BJ (cell line): ENCODE measurements at regions of chr3 and their contacts with region 1.

Region 1: GRCh38 chr3:119681279-119681678 is 4.1 kb upstream of the COX17 start:
- DNase-seq: no peak
- H3K4me3 ChIP-seq: no peak overlapping the region
- H3K27me3 ChIP-seq: peaks cover 2% of the 10 kb centered on the region; the same call in 1 of the 2 replicates
- CTCF ChIP-seq: peak; percentile 55

Region 2: DNA sequence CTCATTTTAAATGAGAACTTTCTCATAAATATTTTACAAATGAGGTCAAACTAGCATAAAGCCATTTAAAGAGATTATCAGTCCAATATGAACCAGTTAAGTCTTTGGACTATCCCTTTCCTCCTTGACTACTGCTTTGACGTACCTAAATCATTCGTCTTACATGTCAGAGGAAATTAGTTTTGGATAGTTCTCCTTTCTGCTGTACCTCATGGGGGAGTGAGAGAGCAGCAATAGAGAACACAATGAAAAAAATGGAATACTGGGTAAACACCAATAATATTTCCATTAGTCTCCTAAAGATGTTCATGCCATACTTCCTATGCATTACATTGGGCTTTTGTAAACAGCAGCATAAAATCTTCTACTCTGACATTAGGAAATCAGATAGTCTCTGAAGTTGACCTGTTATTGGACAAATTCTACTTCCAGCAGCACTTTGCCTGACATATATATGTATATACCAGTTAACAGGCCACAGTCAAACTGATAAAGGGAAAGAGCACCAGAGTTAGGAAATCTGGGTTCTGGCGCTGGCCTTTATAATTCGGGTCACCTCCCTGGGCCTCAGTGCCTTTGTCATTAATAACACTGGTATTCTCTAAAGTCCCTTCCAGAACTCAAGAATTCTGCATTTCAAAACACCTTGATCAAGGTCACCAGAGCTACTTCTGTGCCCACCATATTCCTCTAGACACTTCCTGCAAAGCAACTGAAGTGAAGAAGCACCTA is 156.2 kb before region 1 on chr3:
- CTCF ChIA-PET with region 1: interaction called, 18 read pairs
- POLR2A ChIA-PET with region 1: no interaction called
- DNase-seq: no peak
- H3K4me3 ChIP-seq: no peak overlapping the region
- H3K27me3 ChIP-seq: no peaks in the 10 kb centered on the region
- CTCF ChIP-seq: peak; percentile 44

Region 3: GRCh38 chr3:119600732-119601131 is 80.5 kb before region 1 on chr3:
- CTCF ChIA-PET with region 1: interaction called, 19 read pairs
- POLR2A ChIA-PET with region 1: no interaction called
- DNase-seq: no peak
- H3K4me3 ChIP-seq: no peak overlapping the region
- H3K27me3 ChIP-seq: no peaks in the 10 kb centered on the region
- CTCF ChIP-seq: peak; percentile 47

Region 4: GRCh38 chr3:119695480-119695879 is 14.2 kb after region 1 on chr3:
- CTCF ChIA-PET with region 1: interaction called, 18 read pairs
- POLR2A ChIA-PET with region 1: no interaction called
- DNase-seq: no peak
- H3K4me3 ChIP-seq: no peak overlapping the region
- H3K27me3 ChIP-seq: peaks cover 6% of the 10 kb centered on the region; the same call in 1 of the 2 replicates
- CTCF ChIP-seq: no peak

Region 5: DNA sequence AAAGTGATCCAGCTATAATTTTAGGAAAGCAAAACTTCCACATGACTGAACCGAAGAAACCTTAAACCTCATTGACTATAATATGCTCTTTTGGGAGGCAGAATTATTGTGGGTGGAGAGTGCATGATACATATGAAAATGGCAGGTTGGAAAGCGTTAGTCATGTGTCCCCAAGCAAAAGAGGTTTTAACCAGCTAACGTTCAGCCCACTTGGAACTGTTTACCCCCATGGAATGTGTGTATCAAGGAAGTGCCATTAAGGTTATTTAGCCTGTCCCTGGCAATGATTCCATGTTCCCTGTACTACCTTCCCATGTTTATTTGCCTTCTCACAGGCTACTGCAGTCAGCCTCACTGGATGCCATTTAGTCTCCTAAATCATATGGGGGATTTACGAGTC is 712.0 kb after region 1 on chr3:
- CTCF ChIA-PET with region 1: no interaction called
- POLR2A ChIA-PET with region 1: no interaction called
- DNase-seq: no peak
- H3K4me3 ChIP-seq: no peak overlapping the region
- H3K27me3 ChIP-seq: no peaks in the 10 kb centered on the region
- CTCF ChIP-seq: no peak